B cell (primary cell): ENCODE measurements at regions of chr5 and their contacts with region 1.

Region 1: DNA sequence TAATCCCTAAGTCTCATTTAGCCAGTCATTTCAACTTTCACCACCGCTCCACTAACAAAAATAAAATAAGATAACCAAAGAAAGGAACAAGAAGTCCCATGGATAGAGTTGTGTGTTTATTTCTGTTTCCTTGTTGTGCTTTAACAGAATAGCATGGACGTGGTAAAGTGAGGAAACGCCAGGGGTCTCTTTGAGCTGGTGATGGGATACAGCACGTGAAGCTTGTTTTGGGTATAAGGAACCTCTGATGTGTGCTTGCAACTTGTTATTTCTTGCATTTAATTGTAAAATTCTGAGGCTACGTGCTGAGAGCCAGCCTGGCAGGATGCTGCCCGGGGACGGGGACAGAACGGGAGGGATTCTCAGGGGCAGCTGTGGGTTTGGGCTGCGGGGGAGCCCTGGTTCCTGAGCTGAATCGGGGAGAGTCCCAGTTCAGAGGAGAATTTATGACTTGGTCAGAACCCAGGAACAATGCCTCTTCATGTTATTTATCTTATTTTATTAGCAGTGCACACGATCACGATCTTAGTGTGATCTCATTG is 63.4 kb downstream of the ANKRD33B start:
- DNase-seq: no peak
- ATAC-seq: no peak
- H3K4me3 ChIP-seq: peak overlapping the region; percentile 9 to 64 (median 46)
- H3K4me3 Mint-ChIP-seq: peak overlapping the region; percentile 79
- H3K27ac ChIP-seq: no peak overlapping the region
- H3K27ac Mint-ChIP-seq: peak overlapping the region; percentile 22
- H3K4me1 ChIP-seq: peaks cover 30 to 39% of the 10 kb centered on the region in 2 donors
- H3K4me1 Mint-ChIP-seq: peaks cover 57% of the 10 kb centered on the region
- H3K27me3 ChIP-seq: no peaks in the 10 kb centered on the region
- H3K27me3 Mint-ChIP-seq: no peaks in the 10 kb centered on the region
- CTCF ChIP-seq: no peak

Region 2: DNA sequence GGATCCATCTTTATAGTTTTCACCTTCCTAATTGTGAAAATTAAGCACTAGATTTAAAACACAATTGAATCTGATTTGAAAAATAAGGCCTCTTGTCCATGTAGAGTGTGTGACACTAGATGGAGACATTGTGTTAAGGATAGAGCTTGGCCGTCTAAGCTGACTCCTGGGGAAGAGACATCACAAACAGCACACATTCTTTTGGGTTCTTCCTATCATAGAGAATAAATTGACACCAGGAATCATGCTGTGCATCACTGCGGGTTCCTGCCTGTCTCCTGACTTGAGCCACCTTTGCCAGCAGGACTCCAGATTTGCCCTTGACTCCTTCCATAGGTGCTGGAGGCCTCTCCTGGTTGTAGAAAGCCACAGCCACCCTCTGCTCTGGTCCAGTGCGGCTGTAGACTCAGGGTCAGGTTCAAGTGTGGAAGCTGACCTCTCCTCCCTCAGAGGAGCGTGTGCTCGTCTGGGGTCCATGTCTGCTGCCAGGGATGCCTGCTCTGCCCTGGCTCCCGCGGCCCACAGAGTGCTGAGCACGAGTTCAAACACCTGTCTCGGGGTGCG is 174.4 kb before region 1 on chr5:
- CTCF ChIA-PET with region 1: interaction called, 326 read pairs
- POLR2A ChIA-PET with region 1: interaction called, 5 read pairs
- intact Hi-C with region 1: loop called (anchors 1 kb)
- DNase-seq: peak; percentile 83
- ATAC-seq: peak; percentile 86
- H3K4me3 ChIP-seq: no peak overlapping the region
- H3K4me3 Mint-ChIP-seq: no peak overlapping the region
- H3K27ac ChIP-seq: no peak overlapping the region
- H3K27ac Mint-ChIP-seq: no peak overlapping the region
- H3K4me1 ChIP-seq: no peaks in the 10 kb centered on the region
- H3K4me1 Mint-ChIP-seq: no peaks in the 10 kb centered on the region
- H3K27me3 ChIP-seq: no peaks in the 10 kb centered on the region
- H3K27me3 Mint-ChIP-seq: no peaks in the 10 kb centered on the region
- CTCF ChIP-seq: peak; percentile 85

Region 3: DNA sequence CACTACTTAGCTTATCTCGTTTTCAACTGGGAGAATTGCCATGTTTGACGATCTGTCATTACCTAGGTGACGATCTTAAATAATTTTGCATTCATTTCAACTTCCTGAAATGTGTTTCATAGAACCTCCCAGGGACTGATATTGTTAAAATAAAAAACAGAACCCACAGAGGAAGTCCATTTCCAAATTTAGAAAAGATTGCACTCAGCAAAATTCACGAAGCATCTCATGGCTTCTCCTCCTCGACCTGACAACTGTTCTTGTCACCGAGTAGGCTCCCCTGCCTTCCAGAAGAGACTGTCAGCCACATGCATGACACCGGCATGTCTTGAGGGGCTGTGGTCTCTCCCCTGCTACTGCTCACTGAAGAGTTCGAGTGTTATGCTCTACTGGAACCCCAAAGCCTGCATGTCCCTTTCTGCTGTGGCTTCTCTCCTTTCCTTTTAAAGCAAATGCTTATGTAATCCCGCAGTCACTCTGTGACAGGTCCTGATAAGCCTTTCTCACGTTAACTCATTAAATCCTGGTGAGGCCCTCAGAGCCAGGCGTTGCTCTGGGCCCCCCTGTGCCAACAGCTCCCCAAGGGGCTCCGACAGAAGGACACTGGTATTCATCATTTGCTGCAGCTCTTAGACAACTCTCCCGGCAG is 90.2 kb before region 1 on chr5:
- CTCF ChIA-PET with region 1: no interaction called
- POLR2A ChIA-PET with region 1: no interaction called
- intact Hi-C with region 1: loop called (anchors 1 kb)
- DNase-seq: peak; percentile 70
- ATAC-seq: peak; percentile 65
- H3K4me3 ChIP-seq: peak overlapping the region; percentile 9 to 49 (median 31)
- H3K4me3 Mint-ChIP-seq: peak overlapping the region; percentile 83
- H3K27ac ChIP-seq: peak overlapping the region; percentile 35 to 54
- H3K27ac Mint-ChIP-seq: peak overlapping the region; percentile 75
- H3K4me1 ChIP-seq: peaks cover 20 to 40% of the 10 kb centered on the region in 2 donors
- H3K4me1 Mint-ChIP-seq: peaks cover 32% of the 10 kb centered on the region
- H3K27me3 ChIP-seq: peaks cover 0 to 4% (median 0%) of the 10 kb centered on the region in 4 experiments
- H3K27me3 Mint-ChIP-seq: peaks cover 8% of the 10 kb centered on the region
- CTCF ChIP-seq: no peak

Region 4: DNA sequence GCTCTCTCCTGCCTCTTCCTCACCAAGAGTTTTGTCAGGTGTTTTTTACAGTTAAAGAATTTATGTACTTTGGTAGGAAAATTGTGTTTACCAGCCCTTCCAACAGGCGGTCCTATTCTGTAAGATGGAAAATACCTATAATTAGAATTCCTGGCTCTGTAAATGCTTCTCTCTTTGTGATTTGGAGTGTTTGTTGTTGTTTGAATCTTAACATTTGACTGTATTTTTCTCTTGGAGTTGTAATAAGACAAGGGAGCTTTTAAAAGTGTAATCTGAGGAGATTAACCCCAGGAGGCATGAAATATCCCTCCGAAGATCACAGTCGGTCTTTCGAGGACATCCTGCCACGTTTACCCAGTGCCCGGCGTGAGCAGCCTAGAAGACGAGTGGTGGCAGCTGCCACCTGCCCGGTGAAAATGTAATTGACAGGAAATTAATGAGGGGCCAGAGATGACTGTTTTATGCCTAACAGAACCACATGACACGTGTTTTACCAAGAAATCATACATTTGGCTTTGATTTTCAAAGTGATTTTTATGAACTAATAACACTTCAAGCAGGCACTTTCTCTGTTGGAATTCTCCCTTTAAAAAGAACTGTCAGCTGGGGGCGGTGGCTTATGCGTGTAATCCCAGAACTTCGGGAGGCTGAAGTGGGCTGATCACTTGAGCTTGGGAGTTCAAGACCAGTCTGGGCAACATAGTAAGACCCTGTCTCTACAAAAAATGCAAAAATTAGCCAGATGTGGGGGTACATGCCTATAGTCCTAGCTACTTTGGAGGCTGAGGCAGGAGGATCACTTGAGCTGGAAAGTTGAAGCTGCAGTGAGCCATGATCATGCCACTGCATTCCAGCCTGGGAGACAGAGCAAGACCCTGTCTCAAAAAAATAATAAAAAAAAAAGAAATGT is 43.3 kb before region 1 on chr5:
- CTCF ChIA-PET with region 1: interaction called, 10 read pairs
- POLR2A ChIA-PET with region 1: no interaction called
- intact Hi-C with region 1: loop called (anchors 1 kb)
- DNase-seq: peak; percentile 3
- ATAC-seq: no peak
- H3K4me3 ChIP-seq: no peak overlapping the region
- H3K4me3 Mint-ChIP-seq: peak overlapping the region; percentile 8
- H3K27ac ChIP-seq: no peak overlapping the region
- H3K27ac Mint-ChIP-seq: peak overlapping the region; percentile 1
- H3K4me1 ChIP-seq: peaks cover 63 to 65% of the 10 kb centered on the region in 2 donors
- H3K4me1 Mint-ChIP-seq: peaks cover 90% of the 10 kb centered on the region
- H3K27me3 ChIP-seq: no peaks in the 10 kb centered on the region
- H3K27me3 Mint-ChIP-seq: no peaks in the 10 kb centered on the region
- CTCF ChIP-seq: no peak

Region 5: GRCh38 chr5:10655161-10655971 is 28.1 kb after region 1 on chr5:
- CTCF ChIA-PET with region 1: no interaction called
- POLR2A ChIA-PET with region 1: no interaction called
- intact Hi-C with region 1: no loop called
- DNase-seq: no peak
- ATAC-seq: peak; percentile 53
- H3K4me3 ChIP-seq: no peak overlapping the region
- H3K4me3 Mint-ChIP-seq: peak overlapping the region; percentile 10
- H3K27ac ChIP-seq: no peak overlapping the region
- H3K27ac Mint-ChIP-seq: no peak overlapping the region
- H3K4me1 ChIP-seq: no peaks in the 10 kb centered on the region
- H3K4me1 Mint-ChIP-seq: peaks cover 4% of the 10 kb centered on the region
- H3K27me3 ChIP-seq: no peaks in the 10 kb centered on the region
- H3K27me3 Mint-ChIP-seq: no peaks in the 10 kb centered on the region
- CTCF ChIP-seq: no peak

Region 6: GRCh38 chr5:10689391-10690081 is 62.3 kb after region 1 on chr5:
- CTCF ChIA-PET with region 1: interaction called, 20 read pairs
- POLR2A ChIA-PET with region 1: no interaction called
- intact Hi-C with region 1: no loop called
- DNase-seq: peak; percentile 34
- ATAC-seq: peak; percentile 49
- H3K4me3 ChIP-seq: no peak overlapping the region
- H3K4me3 Mint-ChIP-seq: no peak overlapping the region
- H3K27ac ChIP-seq: no peak overlapping the region
- H3K27ac Mint-ChIP-seq: peak overlapping the region; percentile 12
- H3K4me1 ChIP-seq: peaks cover 0 to 5% of the 10 kb centered on the region in 2 donors
- H3K4me1 Mint-ChIP-seq: peaks cover 12% of the 10 kb centered on the region
- H3K27me3 ChIP-seq: no peaks in the 10 kb centered on the region
- H3K27me3 Mint-ChIP-seq: no peaks in the 10 kb centered on the region
- CTCF ChIP-seq: no peak